ENCODE measurements at regions of chr6 and their contacts with region 1.

Region 1: GRCh38 chr6:169669889-169670288 is 31.9 kb downstream of the WDR27 start:
- DNase-seq: no peak
- H3K4me3 ChIP-seq: no peak overlapping the region
- H3K27ac ChIP-seq: no peak overlapping the region
- H3K4me1 ChIP-seq: no peaks in the 10 kb centered on the region
- H3K27me3 ChIP-seq: no peaks in the 10 kb centered on the region
- CTCF ChIP-seq: no peak

Region 2: GRCh38 chr6:169639653-169640278 is 30.1 kb before region 1 on chr6:
- intact Hi-C with region 1: loop called (anchors 1 kb)
- DNase-seq: no peak
- H3K4me3 ChIP-seq: no peak overlapping the region
- H3K27ac ChIP-seq: no peak overlapping the region
- H3K4me1 ChIP-seq: no peaks in the 10 kb centered on the region
- H3K27me3 ChIP-seq: no peaks in the 10 kb centered on the region
- CTCF ChIP-seq: no peak

Region 3: DNA sequence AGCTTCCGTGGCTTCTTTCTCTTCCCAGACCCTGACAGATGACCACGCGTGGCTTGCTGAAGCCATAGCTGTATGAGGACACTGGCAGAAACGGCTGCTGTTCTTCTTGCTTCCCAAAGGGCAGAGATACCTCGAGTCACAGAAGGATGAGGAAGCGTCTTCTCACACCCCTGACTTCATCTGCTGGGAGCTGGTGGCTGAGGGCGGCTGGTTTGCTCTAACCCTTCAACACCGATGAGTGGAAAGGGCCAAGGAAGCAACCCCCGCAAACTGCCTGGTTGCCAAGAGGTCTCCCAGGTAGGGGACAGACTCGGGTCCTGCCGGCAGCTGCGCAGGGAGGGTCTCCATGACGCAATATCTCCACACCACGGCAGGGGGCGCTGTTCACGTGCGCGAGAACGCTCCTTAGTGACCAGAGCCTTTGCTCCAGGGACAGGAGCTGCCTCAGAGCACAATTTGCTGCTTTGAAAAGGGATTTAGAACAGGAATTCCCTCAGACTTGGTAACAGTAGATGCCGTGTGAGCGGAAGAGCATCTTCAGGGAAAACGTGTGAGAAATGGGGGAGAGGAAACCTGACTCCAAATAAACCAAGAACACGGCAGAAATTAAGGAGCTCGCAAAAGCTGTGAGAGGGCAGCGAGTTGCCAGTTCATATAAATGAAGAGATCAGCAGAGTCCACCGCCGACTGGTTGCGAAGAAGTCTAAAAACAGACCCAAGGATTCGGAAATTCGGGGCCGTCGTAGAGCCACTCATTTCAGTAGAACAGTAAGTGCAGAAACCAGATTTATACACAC is 161.8 kb after region 1 on chr6:
- intact Hi-C with region 1: no loop called
- DNase-seq: peak in 1 of 2 donors; percentile 41
- H3K4me3 ChIP-seq: no peak overlapping the region
- H3K27ac ChIP-seq: no peak overlapping the region
- H3K4me1 ChIP-seq: peaks cover 0 to 3% (median 0%) of the 10 kb centered on the region in 4 donors
- H3K27me3 ChIP-seq: peaks cover 0 to 35% of the 10 kb centered on the region in 2 donors
- CTCF ChIP-seq: peak; percentile 84 to 86

Measured in tibial artery (tissue), 4 donors.